Endothelial cell of umbilical vein (primary cell): ENCODE measurements at regions of chr11 and their contacts with region 1.

Region 1: GRCh38 chr11:85752890-85753581 is 57.9 kb downstream of the SYTL2 start:
- DNase-seq: peak; percentile 9
- H3K4me3 ChIP-seq: no peak overlapping the region
- H3K27ac ChIP-seq: no peak overlapping the region
- H3K4me1 ChIP-seq: peaks cover 5% of the 10 kb centered on the region
- H3K27me3 ChIP-seq: peaks cover 5 to 8% of the 10 kb centered on the region in 2 experiments
- CTCF ChIP-seq: no peak
- POLR2A ChIP-seq: no peak

Region 2: GRCh38 chr11:85737748-85738147 is 15.3 kb before region 1 on chr11:
- CTCF ChIA-PET with region 1: no interaction called
- POLR2A ChIA-PET with region 1: no interaction called
- dilution Hi-C with region 1: no loop called
- intact Hi-C with region 1: loop called (anchors 2 kb)
- DNase-seq: no peak
- H3K4me3 ChIP-seq: no peak overlapping the region
- H3K27ac ChIP-seq: peak overlapping the region; percentile 27
- H3K4me1 ChIP-seq: peaks cover 33% of the 10 kb centered on the region
- H3K27me3 ChIP-seq: no peaks in the 10 kb centered on the region
- CTCF ChIP-seq: no peak
- POLR2A ChIP-seq: no peak

Region 3: GRCh38 chr11:85875142-85875922 is 122.3 kb after region 1 on chr11:
- CTCF ChIA-PET with region 1: no interaction called
- POLR2A ChIA-PET with region 1: no interaction called
- dilution Hi-C with region 1: no loop called
- intact Hi-C with region 1: no loop called
- DNase-seq: no peak
- H3K4me3 ChIP-seq: no peak overlapping the region
- H3K27ac ChIP-seq: no peak overlapping the region
- H3K4me1 ChIP-seq: no peaks in the 10 kb centered on the region
- H3K27me3 ChIP-seq: peaks cover 0 to 2% of the 10 kb centered on the region in 2 experiments
- CTCF ChIP-seq: no peak
- POLR2A ChIP-seq: no peak